Activated CD4-positive, alpha-beta T cell treated with anti-CD3 and anti-CD28 coated beads for 36 hours (primary cell): ENCODE measurements at regions of chr1 and their contacts with region 1.

Region 1: DNA sequence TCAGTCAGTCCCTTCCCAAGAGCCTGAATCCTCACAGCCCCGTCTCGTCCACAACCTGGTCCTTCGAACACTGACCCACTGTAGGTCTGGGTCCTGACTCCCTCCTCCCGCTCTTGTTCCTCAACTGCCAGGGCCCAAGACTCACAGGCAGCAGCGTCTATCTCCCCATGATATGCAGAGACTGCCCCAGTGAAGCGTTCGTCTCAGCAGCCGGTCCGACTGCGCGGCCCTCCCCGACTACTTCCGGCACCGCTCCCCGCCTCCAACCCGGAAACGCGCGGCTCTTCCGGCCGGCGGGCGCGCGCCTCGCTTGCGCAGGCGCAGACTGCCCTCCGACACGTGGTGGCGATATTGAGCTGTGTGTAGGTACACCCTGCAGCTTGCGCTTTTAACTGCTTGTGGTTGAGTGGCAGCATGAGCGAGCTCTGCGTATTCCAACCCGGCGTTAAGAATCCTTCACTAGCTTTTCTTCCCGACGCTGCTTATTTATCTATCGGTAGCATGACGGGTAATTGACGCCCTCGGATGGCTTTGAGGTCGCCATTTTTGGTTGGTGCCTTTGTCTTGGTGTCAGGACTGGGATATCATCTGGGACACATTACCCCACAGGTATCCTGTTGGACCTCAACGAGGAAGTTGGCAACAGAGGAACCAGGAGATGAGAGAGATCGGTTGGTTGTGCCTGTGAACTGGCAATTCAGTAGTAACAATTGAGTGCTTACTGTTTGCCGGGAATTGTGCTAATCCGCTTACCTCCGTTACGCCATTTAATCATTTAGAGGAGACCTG is at the start of gene TAF12:
- DNase-seq: peak; percentile 95
- ATAC-seq: peak; percentile 81
- H3K4me3 Mint-ChIP-seq: peak within 1 kb of the TSS; percentile 98
- H3K27ac Mint-ChIP-seq: peak within 1 kb of the TSS; percentile 97
- H3K4me1 Mint-ChIP-seq: peaks cover 50% of the 10 kb centered on the region
- H3K27me3 Mint-ChIP-seq: no peaks in the 10 kb centered on the region
- total RNA-seq, gene TAF12: 23.8 to 32.5 TPM

Region 2: GRCh38 chr1:28235755-28236655 is 407.0 kb before region 1 on chr1 and contains the start of gene ATP5IF1:
- CTCF ChIA-PET with region 1: no interaction called
- POLR2A ChIA-PET with region 1: interaction called, 7 read pairs
- intact Hi-C with region 1: loop called in 1 of 2 experiments (anchors 2 kb)
- DNase-seq: peak; percentile 97
- ATAC-seq: peak; percentile 97
- H3K4me3 Mint-ChIP-seq: no peak within 1 kb of the TSS
- H3K27ac Mint-ChIP-seq: no peak within 1 kb of the TSS
- H3K4me1 Mint-ChIP-seq: peaks cover 15% of the 10 kb centered on the region
- H3K27me3 Mint-ChIP-seq: no peaks in the 10 kb centered on the region
- total RNA-seq, gene ATP5IF1: 192 to 195 TPM

Region 3: DNA sequence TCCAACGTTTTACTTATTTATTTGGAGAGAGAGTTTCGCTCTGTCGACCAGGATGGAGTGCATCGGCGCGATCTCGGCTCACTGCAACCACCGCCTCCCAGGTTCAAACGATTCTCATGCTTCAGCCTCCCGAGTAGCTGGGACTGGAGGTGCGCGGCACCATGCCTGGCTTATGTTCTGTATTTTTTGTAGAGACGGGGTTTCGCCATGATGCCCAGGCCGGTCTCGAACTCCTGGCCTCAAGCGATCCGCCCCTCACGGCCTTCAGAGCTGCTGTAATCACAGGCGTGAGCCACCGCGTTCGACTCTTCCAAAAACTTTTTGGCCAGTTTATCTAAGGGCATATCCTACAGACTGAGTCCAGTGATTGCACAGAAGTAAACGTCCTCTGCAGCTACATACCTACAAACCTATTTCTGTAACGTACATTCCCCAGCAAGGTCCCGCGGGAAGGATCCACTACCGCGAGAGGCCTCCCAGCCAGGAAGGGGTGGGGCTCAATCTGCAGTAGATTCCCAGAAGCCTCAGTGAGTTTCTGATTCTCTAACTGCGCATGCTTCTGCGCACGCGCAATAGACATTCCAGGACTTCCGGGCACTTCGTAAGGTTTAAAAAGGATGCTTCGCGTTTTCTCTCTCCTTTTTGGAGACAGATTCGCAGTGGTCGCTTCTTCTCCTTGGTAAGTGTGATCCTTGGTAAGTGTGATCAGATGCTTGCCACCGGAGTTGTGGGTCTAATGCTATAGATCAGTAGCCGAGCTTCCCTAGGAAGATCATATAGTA is 137.4 kb before region 1 on chr1 and contains the start of gene RCC1:
- CTCF ChIA-PET with region 1: interaction called, 3 read pairs
- POLR2A ChIA-PET with region 1: interaction called, 13 read pairs
- intact Hi-C with region 1: loop called (anchors 1 kb)
- DNase-seq: peak; percentile 97
- ATAC-seq: peak; percentile 85
- H3K4me3 Mint-ChIP-seq: peak within 1 kb of the TSS; percentile 98
- H3K27ac Mint-ChIP-seq: peak within 1 kb of the TSS; percentile 99
- H3K4me1 Mint-ChIP-seq: peaks cover 26% of the 10 kb centered on the region
- H3K27me3 Mint-ChIP-seq: peaks cover 1% of the 10 kb centered on the region
- total RNA-seq, gene RCC1: 103 to 107 TPM

Region 4: DNA sequence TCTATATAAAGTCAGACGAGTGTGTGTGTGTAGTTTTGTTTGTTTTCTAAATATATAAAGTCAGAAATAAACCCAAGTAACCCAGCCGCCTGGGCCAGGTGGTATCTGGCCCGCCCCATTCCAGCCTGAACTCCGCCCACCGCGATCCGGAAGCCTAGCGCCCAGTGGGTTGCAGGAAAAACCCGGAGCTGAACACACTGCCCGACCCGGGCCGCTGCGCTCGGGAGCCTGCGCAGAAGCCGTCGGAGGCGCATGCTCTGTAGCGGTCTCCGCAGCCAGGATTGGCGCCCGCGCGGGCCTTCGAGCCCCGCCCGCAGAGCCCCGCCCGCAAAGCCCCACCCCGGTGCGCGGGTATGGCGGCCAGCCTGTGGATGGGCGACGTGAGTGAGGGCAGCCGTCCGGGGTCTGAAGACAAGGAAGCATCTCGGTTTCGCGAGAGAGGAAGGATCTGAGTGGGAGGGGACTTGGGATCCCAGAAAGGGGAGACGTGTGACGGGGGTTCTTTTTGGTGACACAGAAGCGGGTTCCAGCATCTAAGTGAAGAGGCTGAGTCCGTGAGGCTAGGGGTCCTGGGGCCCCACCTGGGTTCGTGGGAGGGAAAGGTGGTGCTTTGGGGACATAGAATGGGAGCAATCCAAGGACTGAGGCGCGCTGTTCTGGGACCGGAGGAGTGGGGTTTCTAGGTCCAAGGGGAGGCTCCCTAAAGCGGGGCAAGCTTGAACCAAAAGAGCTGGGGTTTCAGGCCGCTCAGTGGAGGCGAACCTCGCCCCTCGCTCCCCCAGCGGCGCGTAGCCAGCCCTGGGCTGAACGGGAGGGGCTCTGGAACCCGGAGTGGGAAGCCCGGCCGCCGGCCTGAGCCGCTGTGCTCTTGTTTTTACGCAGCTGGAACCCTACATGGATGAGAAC is 90.0 kb before region 1 on chr1 and contains the start of gene TRNAU1AP:
- CTCF ChIA-PET with region 1: interaction called, 3 read pairs
- POLR2A ChIA-PET with region 1: interaction called, 8 read pairs
- intact Hi-C with region 1: loop called in 1 of 2 experiments (anchors 1 kb)
- DNase-seq: peak; percentile 99
- ATAC-seq: peak; percentile 94
- H3K4me3 Mint-ChIP-seq: peak within 1 kb of the TSS; percentile 92
- H3K27ac Mint-ChIP-seq: peak within 1 kb of the TSS; percentile 95
- H3K4me1 Mint-ChIP-seq: peaks cover 24% of the 10 kb centered on the region
- H3K27me3 Mint-ChIP-seq: no peaks in the 10 kb centered on the region
- total RNA-seq, gene TRNAU1AP: 50.7 to 60.2 TPM

Region 5: DNA sequence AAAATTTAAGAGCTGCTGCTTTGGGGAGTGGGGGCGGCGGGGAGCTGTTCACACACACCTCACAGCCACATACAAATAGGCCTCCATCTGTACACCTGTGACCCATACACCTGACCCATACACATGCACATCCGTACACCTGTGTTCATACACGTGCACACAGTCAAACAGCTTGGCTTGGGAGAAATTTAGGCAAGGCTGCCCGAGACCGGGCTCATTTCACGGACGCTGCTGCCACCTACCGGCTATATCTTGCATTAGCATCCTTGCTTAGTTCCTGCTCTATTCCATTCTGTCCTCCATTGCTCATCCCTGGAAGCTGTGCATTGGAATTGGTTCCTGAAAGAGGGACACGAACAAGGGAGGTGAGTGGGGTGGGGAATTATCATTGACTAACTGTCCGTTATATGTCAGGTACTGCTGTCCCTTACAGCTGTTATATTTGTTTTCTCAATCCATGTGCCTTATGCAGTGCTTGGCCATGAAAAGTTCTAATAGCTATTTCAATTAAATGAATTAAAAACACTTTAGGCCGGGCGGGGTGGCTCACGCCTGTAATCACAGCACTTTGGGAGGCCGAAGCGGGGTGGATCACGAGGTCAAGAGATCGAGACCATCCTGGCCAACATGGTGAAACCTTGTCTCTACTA is 234.2 kb after region 1 on chr1:
- CTCF ChIA-PET with region 1: interaction called, 3 read pairs
- POLR2A ChIA-PET with region 1: no interaction called
- intact Hi-C with region 1: loop called (anchors 1 to 5 kb)
- DNase-seq: peak; percentile 86
- ATAC-seq: peak; percentile 70
- H3K4me3 Mint-ChIP-seq: no peak overlapping the region
- H3K27ac Mint-ChIP-seq: no peak overlapping the region
- H3K4me1 Mint-ChIP-seq: peaks cover 10% of the 10 kb centered on the region
- H3K27me3 Mint-ChIP-seq: no peaks in the 10 kb centered on the region